ENCODE measurements at regions of chr4 and their contacts with region 1.

Region 1: DNA sequence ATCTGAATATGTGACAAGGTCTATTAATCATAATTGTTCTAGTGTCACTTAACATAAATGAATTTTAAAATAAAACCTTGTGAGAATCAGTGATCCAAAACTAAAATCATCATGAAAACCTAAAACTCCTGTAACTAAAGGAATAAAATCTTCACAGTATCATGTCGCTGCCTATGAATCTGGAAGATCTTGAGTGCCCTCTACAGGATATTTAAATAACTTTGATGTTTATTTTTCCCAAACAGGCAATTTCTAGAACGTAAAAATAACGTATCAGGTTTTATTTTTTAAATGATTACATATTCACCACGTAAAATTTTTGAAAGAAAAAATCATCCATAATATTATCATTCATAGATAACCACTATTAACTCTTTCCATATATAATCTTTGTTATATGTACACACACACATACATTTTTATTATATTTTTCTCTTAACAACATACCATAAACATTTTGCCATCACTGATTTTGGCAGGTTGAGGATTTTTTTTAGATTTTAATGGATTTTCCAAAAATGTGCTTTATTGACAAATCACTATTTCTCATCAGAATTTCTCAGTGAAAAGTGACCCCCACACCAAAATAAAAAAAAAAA is 79.6 kb downstream of the COMMD8 start:
- DNase-seq: peak; percentile 64
- ATAC-seq: peak; percentile 59; the same call in 1 of the 2 replicates
- H3K4me3 ChIP-seq: no peak overlapping the region
- H3K27ac ChIP-seq: no peak overlapping the region
- H3K4me1 ChIP-seq: no peaks in the 10 kb centered on the region
- H3K27me3 ChIP-seq: no peaks in the 10 kb centered on the region
- CTCF ChIP-seq: peak; percentile 79
- POLR2A ChIP-seq: no peak
- RAD21 ChIP-seq: peak; percentile 84

Region 2: GRCh38 chr4:46073778-46074177 is 1310.2 kb before region 1 on chr4:
- CTCF ChIA-PET with region 1: no interaction called
- POLR2A ChIA-PET with region 1: no interaction called
- dilution Hi-C with region 1: no loop called
- in situ Hi-C with region 1: no loop called
- intact Hi-C with region 1: no loop called
- DNase-seq: no peak
- ATAC-seq: no peak
- H3K4me3 ChIP-seq: no peak overlapping the region
- H3K27ac ChIP-seq: no peak overlapping the region
- H3K4me1 ChIP-seq: no peaks in the 10 kb centered on the region
- H3K27me3 ChIP-seq: no peaks in the 10 kb centered on the region
- CTCF ChIP-seq: no peak
- POLR2A ChIP-seq: no peak
- RAD21 ChIP-seq: no peak

Region 3: DNA sequence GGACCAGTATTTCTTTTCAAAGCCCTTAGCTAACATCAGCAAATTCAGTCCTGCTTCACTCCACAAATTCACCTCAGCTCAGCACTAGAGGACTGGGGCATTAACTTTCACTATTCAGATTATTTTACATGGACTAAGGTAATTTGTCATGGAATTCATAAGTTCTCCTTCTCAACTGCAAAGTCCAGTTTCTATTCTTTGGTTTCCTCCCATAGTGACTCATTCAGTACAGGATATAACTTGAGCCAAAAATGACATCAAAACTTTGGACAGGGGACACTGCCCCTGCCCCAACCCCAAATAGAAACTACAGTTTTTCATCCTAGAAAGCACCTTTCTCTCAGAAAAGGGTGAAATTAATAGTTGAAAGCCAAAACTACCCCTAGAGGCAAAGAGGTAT is 527.6 kb before region 1 on chr4:
- CTCF ChIA-PET with region 1: no interaction called
- POLR2A ChIA-PET with region 1: no interaction called
- dilution Hi-C with region 1: no loop called
- in situ Hi-C with region 1: loop called (anchors 10 kb)
- intact Hi-C with region 1: no loop called
- DNase-seq: peak; percentile 10
- ATAC-seq: no peak
- H3K4me3 ChIP-seq: no peak overlapping the region
- H3K27ac ChIP-seq: no peak overlapping the region
- H3K4me1 ChIP-seq: no peaks in the 10 kb centered on the region
- H3K27me3 ChIP-seq: no peaks in the 10 kb centered on the region
- CTCF ChIP-seq: no peak
- POLR2A ChIP-seq: no peak
- RAD21 ChIP-seq: no peak

Region 4: GRCh38 chr4:47002593-47002992 is 381.3 kb before region 1 on chr4:
- CTCF ChIA-PET with region 1: no interaction called
- POLR2A ChIA-PET with region 1: no interaction called
- dilution Hi-C with region 1: no loop called
- in situ Hi-C with region 1: no loop called
- intact Hi-C with region 1: loop called (anchors 5 kb)
- DNase-seq: peak; percentile 79
- ATAC-seq: peak; percentile 97
- H3K4me3 ChIP-seq: no peak overlapping the region
- H3K27ac ChIP-seq: no peak overlapping the region
- H3K4me1 ChIP-seq: no peaks in the 10 kb centered on the region
- H3K27me3 ChIP-seq: no peaks in the 10 kb centered on the region
- CTCF ChIP-seq: peak; percentile 68
- POLR2A ChIP-seq: no peak
- RAD21 ChIP-seq: peak; percentile 64

Region 5: GRCh38 chr4:47122592-47123291 is 261.2 kb before region 1 on chr4:
- CTCF ChIA-PET with region 1: interaction called, 3 read pairs
- POLR2A ChIA-PET with region 1: no interaction called
- dilution Hi-C with region 1: no loop called
- in situ Hi-C with region 1: no loop called
- intact Hi-C with region 1: loop called (anchors 1 kb)
- DNase-seq: peak; percentile 81
- ATAC-seq: peak; percentile 81
- H3K4me3 ChIP-seq: no peak overlapping the region
- H3K27ac ChIP-seq: no peak overlapping the region
- H3K4me1 ChIP-seq: peaks cover 2% of the 10 kb centered on the region
- H3K27me3 ChIP-seq: no peaks in the 10 kb centered on the region
- CTCF ChIP-seq: peak; percentile 88
- POLR2A ChIP-seq: no peak
- RAD21 ChIP-seq: peak; percentile 84

Measured in IMR-90 (cell line).